ENCODE measurements at regions of chr6 and their contacts with region 1.

Region 1: GRCh38 chr6:3410385-3411360 is 46.2 kb downstream of the SLC22A23 start:
- DNase-seq: peak; percentile 79
- ATAC-seq: no peak
- H3K4me3 Mint-ChIP-seq: no peak overlapping the region
- H3K27ac Mint-ChIP-seq: no peak overlapping the region
- H3K4me1 Mint-ChIP-seq: peaks cover 12% of the 10 kb centered on the region
- H3K27me3 Mint-ChIP-seq: no peaks in the 10 kb centered on the region

Region 2: DNA sequence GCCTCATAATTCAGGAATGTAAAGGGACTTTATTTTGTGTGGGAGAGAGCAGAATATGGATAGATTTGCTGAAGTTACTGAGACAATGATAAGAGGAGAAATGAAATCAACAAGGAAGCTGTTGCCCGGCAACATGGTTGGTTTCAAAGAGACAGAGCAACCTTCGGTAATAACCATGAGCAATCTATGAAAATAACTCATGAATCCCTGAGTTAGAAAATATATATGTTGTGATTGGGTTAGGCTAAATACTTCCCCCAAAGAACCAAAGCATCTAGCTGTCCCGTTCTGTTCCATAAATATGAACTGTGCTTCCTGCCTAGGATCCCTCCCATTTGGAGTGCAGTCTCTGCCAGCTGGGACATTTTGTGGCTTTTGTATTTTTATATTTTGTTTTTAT is 592.1 kb before region 1 on chr6:
- CTCF ChIA-PET with region 1: no interaction called
- POLR2A ChIA-PET with region 1: no interaction called
- intact Hi-C with region 1: no loop called
- DNase-seq: peak; percentile 42
- ATAC-seq: no peak
- H3K4me3 Mint-ChIP-seq: no peak overlapping the region
- H3K27ac Mint-ChIP-seq: peak overlapping the region; percentile 1
- H3K4me1 Mint-ChIP-seq: peaks cover 40% of the 10 kb centered on the region
- H3K27me3 Mint-ChIP-seq: no peaks in the 10 kb centered on the region

Region 3: DNA sequence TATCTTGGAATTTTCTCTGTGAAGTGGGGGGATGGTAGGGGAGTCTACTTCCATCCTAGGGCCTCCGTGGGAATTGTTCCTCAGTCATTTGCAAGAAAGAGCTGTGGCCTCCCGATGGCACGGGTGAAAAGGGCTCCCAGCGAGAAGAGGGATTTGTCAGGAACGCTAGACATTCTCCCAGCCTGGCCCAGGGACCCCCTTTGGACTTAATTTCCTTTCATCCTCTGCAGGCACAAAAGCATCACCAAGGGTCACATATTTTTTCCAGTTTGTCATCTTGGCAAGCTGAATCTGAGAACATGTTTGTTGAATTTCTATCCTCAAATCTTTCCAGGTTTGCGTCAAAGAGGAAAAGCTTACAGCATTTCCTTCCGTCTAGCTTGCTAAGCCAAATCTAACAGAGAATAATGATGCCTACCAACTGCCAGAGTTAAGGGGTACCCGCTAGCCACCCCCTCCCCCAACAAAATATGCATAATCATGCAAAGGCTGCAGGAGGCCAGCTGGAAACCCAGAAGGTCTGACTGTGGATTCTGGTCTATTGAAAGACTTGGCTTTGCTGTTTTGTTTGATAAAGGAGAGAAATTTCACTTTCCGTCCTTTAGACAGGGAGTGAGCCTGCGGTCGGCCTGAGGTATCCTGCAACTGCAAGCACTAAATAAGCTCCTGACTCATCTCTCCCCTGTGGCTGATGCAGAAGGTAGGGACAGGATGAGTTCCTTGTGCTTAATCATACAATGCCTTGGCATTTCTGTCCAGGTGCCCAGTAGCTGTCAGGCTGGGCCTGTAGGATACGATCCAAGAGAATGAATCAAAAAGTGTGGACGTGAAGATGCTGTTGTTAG is 128.8 kb before region 1 on chr6:
- CTCF ChIA-PET with region 1: interaction called, 4 read pairs
- POLR2A ChIA-PET with region 1: no interaction called
- intact Hi-C with region 1: loop called in 1 of 2 experiments (anchors 5 kb)
- DNase-seq: no peak
- ATAC-seq: no peak
- H3K4me3 Mint-ChIP-seq: no peak overlapping the region
- H3K27ac Mint-ChIP-seq: no peak overlapping the region
- H3K4me1 Mint-ChIP-seq: peaks cover 3% of the 10 kb centered on the region
- H3K27me3 Mint-ChIP-seq: no peaks in the 10 kb centered on the region

Region 4: DNA sequence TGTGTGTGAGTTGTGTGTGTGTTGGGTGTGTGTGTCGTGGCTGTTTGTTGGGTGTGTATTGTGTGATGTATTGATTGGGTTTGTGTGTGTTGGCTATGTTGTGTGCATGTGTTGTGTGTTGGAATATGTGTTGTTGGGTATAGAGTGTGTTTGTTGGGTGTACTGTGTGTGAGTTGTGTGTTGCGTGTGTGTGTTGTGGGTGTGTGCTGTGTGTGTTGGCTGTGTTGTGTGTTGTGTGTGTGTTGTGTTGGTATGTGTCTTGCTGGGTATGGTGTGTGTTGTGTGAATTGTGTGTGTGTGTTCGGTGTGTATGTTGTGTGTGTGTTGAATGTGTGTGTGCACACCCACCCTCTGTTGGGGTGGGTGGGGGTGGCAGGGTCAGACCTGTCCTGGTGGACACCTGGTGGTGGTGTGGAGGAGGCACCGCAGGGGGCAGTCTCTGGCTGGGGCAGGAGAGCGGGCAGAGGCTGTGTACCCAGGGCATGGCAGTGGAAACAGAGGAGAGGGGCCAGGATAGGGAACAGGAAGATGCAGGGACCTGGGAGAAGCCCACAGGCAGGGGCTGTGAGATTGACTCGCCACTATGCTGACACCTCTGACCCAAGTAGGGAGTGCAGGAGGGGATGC is 366.3 kb after region 1 on chr6:
- CTCF ChIA-PET with region 1: no interaction called
- POLR2A ChIA-PET with region 1: no interaction called
- intact Hi-C with region 1: no loop called
- DNase-seq: no peak
- ATAC-seq: peak; percentile 12
- H3K4me3 Mint-ChIP-seq: no peak overlapping the region
- H3K27ac Mint-ChIP-seq: peak overlapping the region; percentile 20
- H3K4me1 Mint-ChIP-seq: no peaks in the 10 kb centered on the region
- H3K27me3 Mint-ChIP-seq: peaks cover 8% of the 10 kb centered on the region